Gastrocnemius medialis (tissue), 4 donors: ENCODE measurements at regions of chr7 and their contacts with region 1.

Region 1: DNA sequence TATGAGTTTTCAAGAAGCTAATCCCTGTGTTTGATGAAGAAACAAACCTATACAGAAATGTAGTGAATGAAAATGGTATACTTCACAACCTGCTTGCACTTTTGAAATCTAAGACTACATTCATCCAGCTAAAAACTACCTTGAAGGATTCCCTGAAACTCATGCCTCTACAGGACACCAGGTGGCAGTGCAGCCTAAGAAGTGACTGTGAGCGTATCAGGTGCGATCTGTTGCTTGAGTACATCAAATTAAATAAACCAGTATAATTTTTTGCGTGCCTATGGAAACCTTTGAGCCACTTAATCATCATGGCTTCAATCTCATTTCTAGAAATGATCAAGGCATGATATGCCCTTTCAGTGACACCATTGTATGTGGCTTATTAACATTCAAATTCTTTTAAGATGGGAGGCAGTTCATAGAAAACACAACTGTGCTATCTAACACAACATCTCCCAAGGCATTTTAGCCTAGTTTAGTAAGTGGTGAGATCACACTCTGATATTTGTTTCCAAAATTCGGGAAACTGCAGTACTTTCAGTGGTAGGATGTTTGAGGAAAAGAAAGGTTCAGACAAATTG is 57.4 kb downstream of the PPP1R17 start:
- DNase-seq: peak in 1 of 2 donors; percentile 29
- ATAC-seq: no peak
- H3K4me3 ChIP-seq: no peak overlapping the region
- H3K27ac ChIP-seq: no peak overlapping the region
- H3K4me1 ChIP-seq: no peaks in the 10 kb centered on the region
- H3K27me3 ChIP-seq: no peaks in the 10 kb centered on the region
- CTCF ChIP-seq: peak; percentile 42 to 74 (median 68)
- POLR2A ChIP-seq: no peak

Region 2: GRCh38 chr7:31134246-31135188 is 609.9 kb before region 1 on chr7:
- in situ Hi-C with region 1: loop called in 2 of 4 experiments (anchors 25 kb)
- intact Hi-C with region 1: no loop called
- DNase-seq: peak in 1 of 2 donors; percentile 24
- ATAC-seq: peak; percentile 70 to 74
- H3K4me3 ChIP-seq: no peak overlapping the region
- H3K27ac ChIP-seq: no peak overlapping the region
- H3K4me1 ChIP-seq: no peaks in the 10 kb centered on the region
- H3K27me3 ChIP-seq: no peaks in the 10 kb centered on the region
- CTCF ChIP-seq: peak; percentile 26 to 73 (median 59)
- POLR2A ChIP-seq: no peak

Region 3: DNA sequence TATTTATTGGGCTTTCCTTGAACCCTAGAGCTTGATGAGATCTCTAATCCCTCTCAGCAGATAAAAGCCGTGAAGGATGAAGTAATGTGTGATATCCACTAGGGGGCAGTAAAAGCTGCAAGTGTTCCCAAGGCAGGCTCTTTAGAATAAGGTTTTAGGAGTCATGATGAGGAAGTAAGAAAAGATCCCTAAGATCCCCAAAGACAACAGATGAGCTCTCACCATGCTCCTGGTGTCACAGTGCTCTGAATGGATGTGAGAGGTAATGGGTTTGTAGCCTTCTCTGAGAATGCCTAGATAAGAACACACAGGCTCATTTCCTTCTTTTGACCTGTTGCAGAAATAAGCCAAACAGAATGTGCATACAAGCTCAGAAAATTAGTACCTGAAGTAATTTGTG is 300.9 kb before region 1 on chr7:
- in situ Hi-C with region 1: no loop called
- intact Hi-C with region 1: no loop called
- DNase-seq: no peak
- ATAC-seq: peak in 1 of 2 donors; percentile 53
- H3K4me3 ChIP-seq: no peak overlapping the region
- H3K27ac ChIP-seq: no peak overlapping the region
- H3K4me1 ChIP-seq: no peaks in the 10 kb centered on the region
- H3K27me3 ChIP-seq: no peaks in the 10 kb centered on the region
- CTCF ChIP-seq: peak in 4 of 5 experiments; percentile 23 to 65 (median 52)
- POLR2A ChIP-seq: no peak

Region 4: DNA sequence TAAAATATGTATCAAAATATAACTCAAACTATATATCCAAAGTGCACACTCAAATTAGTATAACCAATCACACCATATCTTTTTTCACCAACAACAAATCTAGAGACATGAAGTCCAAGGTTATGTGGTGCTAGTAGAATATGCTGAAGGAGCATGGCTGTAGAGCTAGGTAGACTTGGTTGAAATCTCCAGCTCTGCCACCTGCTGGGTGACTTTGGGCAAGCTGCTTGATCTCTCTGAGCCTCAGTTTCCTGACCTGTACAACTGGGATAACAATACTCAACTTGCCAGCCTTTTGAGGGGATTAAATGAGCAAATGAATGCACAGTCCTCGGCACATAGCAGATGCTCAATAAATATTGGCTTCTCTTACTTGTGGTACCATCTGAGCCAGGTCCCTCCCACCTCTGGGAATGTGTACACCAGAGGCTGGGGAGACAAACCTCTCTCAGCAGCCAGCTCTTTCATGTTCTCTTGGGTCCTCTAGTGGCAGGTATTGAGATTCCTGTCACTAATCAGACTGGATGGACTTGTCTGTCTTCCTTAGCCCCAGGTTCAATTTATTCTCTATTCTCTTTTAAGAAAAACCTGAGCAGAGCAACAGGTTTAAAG is 420.1 kb after region 1 on chr7:
- in situ Hi-C with region 1: no loop called
- intact Hi-C with region 1: loop called (anchors 2 kb)
- DNase-seq: no peak
- ATAC-seq: no peak
- H3K4me3 ChIP-seq: no peak overlapping the region
- H3K27ac ChIP-seq: no peak overlapping the region
- H3K4me1 ChIP-seq: peaks cover 5 to 10% of the 10 kb centered on the region in 2 donors
- H3K27me3 ChIP-seq: no peaks in the 10 kb centered on the region
- CTCF ChIP-seq: peak in 1 of 5 experiments; percentile 25
- POLR2A ChIP-seq: no peak

Region 5: DNA sequence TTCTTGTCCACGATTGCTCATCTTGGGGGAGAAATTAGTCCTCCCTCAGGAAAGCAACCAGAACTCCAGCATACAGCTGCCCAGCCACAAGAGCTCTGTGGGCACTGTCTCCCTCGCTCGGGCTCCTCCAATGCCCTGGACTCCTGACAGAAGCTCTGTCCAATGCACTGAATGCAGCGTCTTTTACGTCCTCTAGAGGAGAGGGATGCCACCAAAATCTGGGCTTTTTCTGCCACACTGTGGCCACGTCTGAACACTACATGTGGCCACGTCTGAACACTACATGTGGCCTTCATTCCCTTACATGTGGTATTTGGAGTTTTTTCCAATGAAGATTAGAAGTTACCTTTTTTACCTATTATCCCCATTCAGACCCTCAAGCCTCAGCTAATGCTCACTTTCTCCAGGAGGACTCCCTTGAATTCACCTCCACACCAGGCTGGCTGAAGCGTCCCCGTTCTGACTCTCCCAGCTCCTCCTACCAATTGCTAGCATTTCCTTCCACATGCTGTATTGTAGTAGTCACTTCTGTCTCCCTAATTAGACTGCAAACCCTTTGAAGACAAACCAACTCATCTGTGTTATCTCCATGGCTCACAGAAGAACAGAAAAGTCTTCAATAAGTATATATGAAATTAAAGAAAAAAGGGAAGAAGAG is 460.1 kb after region 1 on chr7:
- in situ Hi-C with region 1: loop called (anchors 5 to 25 kb)
- intact Hi-C with region 1: loop called (anchors 1 kb)
- DNase-seq: no peak
- ATAC-seq: peak in 1 of 2 donors; percentile 41
- H3K4me3 ChIP-seq: peak overlapping the region in 1 of 4 donors; percentile 2
- H3K27ac ChIP-seq: no peak overlapping the region
- H3K4me1 ChIP-seq: no peaks in the 10 kb centered on the region
- H3K27me3 ChIP-seq: no peaks in the 10 kb centered on the region
- CTCF ChIP-seq: peak in 4 of 5 experiments; percentile 18 to 53 (median 46)
- POLR2A ChIP-seq: no peak

Region 6: GRCh38 chr7:32357535-32358277 is 613.3 kb after region 1 on chr7:
- in situ Hi-C with region 1: loop called in 2 of 4 experiments (anchors 10 to 25 kb)
- intact Hi-C with region 1: no loop called
- DNase-seq: no peak
- ATAC-seq: no peak
- H3K4me3 ChIP-seq: no peak overlapping the region
- H3K27ac ChIP-seq: no peak overlapping the region
- H3K4me1 ChIP-seq: no peaks in the 10 kb centered on the region
- H3K27me3 ChIP-seq: no peaks in the 10 kb centered on the region
- CTCF ChIP-seq: no peak
- POLR2A ChIP-seq: no peak

Region 7: GRCh38 chr7:32495298-32496176 is 751.2 kb after region 1 on chr7 and contains the start of gene AVL9:
- in situ Hi-C with region 1: loop called in 1 of 4 experiments (anchors 25 kb)
- intact Hi-C with region 1: no loop called
- DNase-seq: peak; percentile 98
- ATAC-seq: peak; percentile 89 to 94
- H3K4me3 ChIP-seq: peak within 1 kb of the TSS; percentile 76 to 98 (median 88)
- H3K27ac ChIP-seq: peak within 1 kb of the TSS; percentile 91 to 98 (median 96)
- H3K4me1 ChIP-seq: peaks cover 21% of the 10 kb centered on the region in 2 donors
- H3K27me3 ChIP-seq: no peaks in the 10 kb centered on the region
- CTCF ChIP-seq: peak in 1 of 5 experiments; percentile 5
- POLR2A ChIP-seq: peak; percentile 79 to 88
- total RNA-seq, gene AVL9: 22.3 to 27.6 (median 25.5) TPM